MCF 10A (cell line): ENCODE measurements at regions of chr16 and their contacts with region 1.

Region 1: DNA sequence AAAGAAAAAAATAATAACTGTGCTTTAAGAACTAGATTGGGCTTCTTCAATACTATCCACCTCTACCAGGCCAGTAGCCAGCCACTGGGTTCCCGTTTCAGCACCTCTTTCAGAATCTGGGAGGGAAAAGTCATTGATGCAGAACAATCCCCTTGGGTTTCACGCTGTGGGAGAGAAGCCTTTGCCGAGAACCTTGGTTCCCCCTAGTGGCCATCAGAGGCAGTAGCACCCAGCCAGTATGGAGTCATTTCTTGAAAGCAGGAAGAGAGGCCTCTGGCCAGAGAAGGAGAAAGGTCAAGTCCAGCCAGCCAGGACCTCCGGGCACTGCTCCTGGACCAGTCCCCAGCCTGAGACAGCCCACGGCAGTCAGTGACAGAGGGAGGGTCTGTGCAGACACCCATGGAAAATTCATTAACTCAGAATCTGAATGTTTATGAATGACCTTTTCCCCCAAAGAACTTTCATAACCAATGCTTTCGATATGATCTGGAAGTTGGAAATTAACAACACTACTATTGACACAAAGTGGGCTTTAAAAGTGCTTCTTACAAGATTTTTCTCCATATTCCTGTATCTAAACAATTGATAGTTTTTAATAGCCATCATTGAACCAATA is 51.2 kb upstream of the CDH5 start:
- DNase-seq: peak; percentile 79
- H3K4me3 Mint-ChIP-seq: no peak overlapping the region
- H3K27ac Mint-ChIP-seq: no peak overlapping the region
- H3K4me1 Mint-ChIP-seq: no peaks in the 10 kb centered on the region
- H3K27me3 Mint-ChIP-seq: peaks cover 19% of the 10 kb centered on the region
- CTCF ChIP-seq: peak; percentile 92

Region 2: DNA sequence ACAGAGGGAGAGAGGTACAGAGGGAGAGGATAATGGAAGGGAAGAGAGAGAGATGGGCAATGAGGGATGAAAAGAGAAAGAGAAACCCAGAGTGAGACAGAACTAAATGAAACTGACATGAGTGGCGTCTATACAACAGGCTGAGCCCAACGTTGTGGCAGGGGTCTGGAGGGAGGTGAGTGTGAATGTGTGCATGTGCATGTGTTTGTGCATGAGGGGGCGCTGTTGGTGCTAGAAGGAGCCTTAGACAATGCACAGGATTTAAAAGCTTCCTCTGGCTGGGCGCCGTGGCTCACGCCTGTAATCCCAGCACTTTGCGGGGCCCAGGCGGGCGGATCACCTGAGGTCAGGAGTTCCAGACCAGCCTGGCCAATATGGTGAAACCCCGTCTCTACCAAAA is 738.7 kb before region 1 on chr16:
- CTCF ChIA-PET with region 1: no interaction called
- POLR2A ChIA-PET with region 1: no interaction called
- intact Hi-C with region 1: no loop called
- DNase-seq: no peak
- H3K4me3 Mint-ChIP-seq: no peak overlapping the region
- H3K27ac Mint-ChIP-seq: no peak overlapping the region
- H3K4me1 Mint-ChIP-seq: no peaks in the 10 kb centered on the region
- H3K27me3 Mint-ChIP-seq: no peaks in the 10 kb centered on the region
- CTCF ChIP-seq: no peak

Region 3: GRCh38 chr16:66070140-66070917 is 245.0 kb before region 1 on chr16:
- CTCF ChIA-PET with region 1: no interaction called
- POLR2A ChIA-PET with region 1: no interaction called
- intact Hi-C with region 1: no loop called
- DNase-seq: no peak
- H3K4me3 Mint-ChIP-seq: no peak overlapping the region
- H3K27ac Mint-ChIP-seq: no peak overlapping the region
- H3K4me1 Mint-ChIP-seq: no peaks in the 10 kb centered on the region
- H3K27me3 Mint-ChIP-seq: no peaks in the 10 kb centered on the region
- CTCF ChIP-seq: no peak

Region 4: GRCh38 chr16:66270333-66270927 is 44.9 kb before region 1 on chr16:
- CTCF ChIA-PET with region 1: interaction called, 132 read pairs
- POLR2A ChIA-PET with region 1: no interaction called
- intact Hi-C with region 1: loop called (anchors 1 kb)
- DNase-seq: peak; percentile 56
- H3K4me3 Mint-ChIP-seq: peak overlapping the region; percentile 7
- H3K27ac Mint-ChIP-seq: no peak overlapping the region
- H3K4me1 Mint-ChIP-seq: peaks cover 14% of the 10 kb centered on the region
- H3K27me3 Mint-ChIP-seq: no peaks in the 10 kb centered on the region
- CTCF ChIP-seq: peak; percentile 94

Region 5: DNA sequence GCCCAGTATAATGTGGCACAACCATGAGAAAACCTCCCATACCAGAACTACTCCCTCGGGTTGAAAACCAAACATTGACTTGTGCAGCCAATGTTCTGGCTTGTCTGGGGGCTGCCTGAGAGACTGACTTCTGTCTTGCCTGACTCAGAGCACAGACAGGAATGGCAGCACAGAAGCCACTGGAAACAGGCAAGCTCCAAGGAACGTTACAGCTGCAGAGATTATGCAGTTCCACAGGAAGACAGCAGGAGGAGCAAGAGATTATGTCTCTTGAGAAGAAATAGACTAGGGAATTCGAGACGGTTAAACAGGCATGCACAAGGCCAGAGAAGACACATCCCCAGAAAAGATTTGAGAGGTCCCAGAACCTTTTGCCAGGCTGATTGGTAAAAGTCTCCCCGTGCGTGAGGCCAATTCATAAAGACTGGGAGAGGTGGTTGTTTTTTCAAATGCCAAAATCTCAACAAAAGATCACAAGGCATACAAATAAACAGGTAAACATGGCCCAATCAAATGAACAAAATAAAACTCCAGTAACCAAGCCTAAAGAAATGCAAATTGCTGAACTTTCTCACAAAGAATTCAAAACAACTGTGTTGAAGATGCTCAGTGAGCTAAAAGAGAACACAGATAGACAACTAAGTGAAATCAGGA is 39.4 kb before region 1 on chr16:
- CTCF ChIA-PET with region 1: interaction called, 132 read pairs
- POLR2A ChIA-PET with region 1: no interaction called
- intact Hi-C with region 1: loop called (anchors 1 kb)
- DNase-seq: peak; percentile 78
- H3K4me3 Mint-ChIP-seq: no peak overlapping the region
- H3K27ac Mint-ChIP-seq: no peak overlapping the region
- H3K4me1 Mint-ChIP-seq: peaks cover 29% of the 10 kb centered on the region
- H3K27me3 Mint-ChIP-seq: peaks cover 16% of the 10 kb centered on the region
- CTCF ChIP-seq: peak; percentile 76

Region 6: DNA sequence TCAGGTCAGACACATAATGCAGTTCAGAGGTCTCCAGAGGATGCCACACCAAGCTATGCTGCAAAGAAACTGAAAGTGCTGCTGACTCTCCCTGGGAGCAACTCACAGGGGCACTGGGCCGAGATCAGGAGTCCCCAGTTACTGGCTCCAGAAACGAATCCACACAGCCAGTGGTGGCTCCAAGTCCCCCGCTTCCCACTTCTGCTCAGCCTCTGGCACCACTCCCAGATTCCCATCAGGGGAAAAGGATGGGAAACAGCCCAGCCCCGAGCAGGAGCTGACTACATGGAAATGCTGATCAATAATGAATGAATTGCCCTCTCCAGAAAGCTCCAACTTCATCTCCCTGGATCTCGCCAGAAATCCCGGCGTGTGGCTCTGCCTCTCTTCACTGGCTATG is 11.2 kb before region 1 on chr16:
- CTCF ChIA-PET with region 1: interaction called, 10 read pairs
- POLR2A ChIA-PET with region 1: no interaction called
- intact Hi-C with region 1: no loop called
- DNase-seq: no peak
- H3K4me3 Mint-ChIP-seq: no peak overlapping the region
- H3K27ac Mint-ChIP-seq: no peak overlapping the region
- H3K4me1 Mint-ChIP-seq: no peaks in the 10 kb centered on the region
- H3K27me3 Mint-ChIP-seq: peaks cover 33% of the 10 kb centered on the region
- CTCF ChIP-seq: no peak